IMR-90 (cell line): ENCODE measurements at regions of chr1 and their contacts with region 1.

Region 1: GRCh38 chr1:26044971-26045721 is 772 bp downstream of the SLC30A2 start:
- DNase-seq: no peak
- ATAC-seq: no peak
- H3K4me3 ChIP-seq: no peak overlapping the region
- H3K27ac ChIP-seq: no peak overlapping the region
- H3K4me1 ChIP-seq: no peaks in the 10 kb centered on the region
- H3K27me3 ChIP-seq: peaks cover 84% of the 10 kb centered on the region
- CTCF ChIP-seq: no peak
- POLR2A ChIP-seq: no peak
- RAD21 ChIP-seq: no peak

Region 2: DNA sequence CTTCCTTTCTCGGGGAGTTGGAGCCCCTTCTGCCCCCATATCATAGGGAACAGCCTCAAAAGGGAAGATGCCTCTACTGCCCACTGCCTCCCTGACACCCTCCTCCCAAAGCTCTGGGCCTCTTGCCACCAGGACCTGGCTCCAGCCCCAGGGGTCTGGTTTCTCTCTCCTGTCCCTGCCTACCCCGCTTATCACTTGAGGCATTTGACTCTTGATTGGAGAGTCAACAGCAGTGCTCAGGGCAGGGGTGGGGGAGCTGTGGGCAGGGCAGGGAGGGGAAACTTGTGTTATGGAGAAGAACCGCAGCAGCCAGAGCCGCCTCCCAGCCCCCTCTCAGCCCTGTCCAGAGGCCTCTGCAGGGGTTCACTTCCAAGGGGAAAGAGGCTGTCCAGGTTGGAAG is 21.7 kb after region 1 on chr1:
- CTCF ChIA-PET with region 1: no interaction called
- POLR2A ChIA-PET with region 1: no interaction called
- dilution Hi-C with region 1: no loop called
- in situ Hi-C with region 1: no loop called
- intact Hi-C with region 1: no loop called
- DNase-seq: no peak
- ATAC-seq: no peak
- H3K4me3 ChIP-seq: no peak overlapping the region
- H3K27ac ChIP-seq: no peak overlapping the region
- H3K4me1 ChIP-seq: no peaks in the 10 kb centered on the region
- H3K27me3 ChIP-seq: peaks cover 67% of the 10 kb centered on the region
- CTCF ChIP-seq: no peak
- POLR2A ChIP-seq: no peak
- RAD21 ChIP-seq: no peak

Region 3: GRCh38 chr1:26094677-26095383 is 49.7 kb after region 1 on chr1:
- CTCF ChIA-PET with region 1: no interaction called
- POLR2A ChIA-PET with region 1: no interaction called
- dilution Hi-C with region 1: no loop called
- in situ Hi-C with region 1: loop called (anchors 5 kb)
- intact Hi-C with region 1: no loop called
- DNase-seq: no peak
- ATAC-seq: peak; percentile 29; the same call in 1 of the 2 replicates
- H3K4me3 ChIP-seq: no peak overlapping the region
- H3K27ac ChIP-seq: no peak overlapping the region
- H3K4me1 ChIP-seq: peaks cover 2% of the 10 kb centered on the region; the same call in 1 of the 2 replicates
- H3K27me3 ChIP-seq: peaks cover 34% of the 10 kb centered on the region
- CTCF ChIP-seq: no peak
- POLR2A ChIP-seq: no peak
- RAD21 ChIP-seq: no peak